Activated CD4-positive, alpha-beta T cell treated with anti-CD3 and anti-CD28 coated beads, Interleukin-2, amount 10 ng/mL, durations not matched to agents 24 days and 14 days (primary cell): ENCODE measurements at regions of chr21 and their contacts with region 1.

Region 1: DNA sequence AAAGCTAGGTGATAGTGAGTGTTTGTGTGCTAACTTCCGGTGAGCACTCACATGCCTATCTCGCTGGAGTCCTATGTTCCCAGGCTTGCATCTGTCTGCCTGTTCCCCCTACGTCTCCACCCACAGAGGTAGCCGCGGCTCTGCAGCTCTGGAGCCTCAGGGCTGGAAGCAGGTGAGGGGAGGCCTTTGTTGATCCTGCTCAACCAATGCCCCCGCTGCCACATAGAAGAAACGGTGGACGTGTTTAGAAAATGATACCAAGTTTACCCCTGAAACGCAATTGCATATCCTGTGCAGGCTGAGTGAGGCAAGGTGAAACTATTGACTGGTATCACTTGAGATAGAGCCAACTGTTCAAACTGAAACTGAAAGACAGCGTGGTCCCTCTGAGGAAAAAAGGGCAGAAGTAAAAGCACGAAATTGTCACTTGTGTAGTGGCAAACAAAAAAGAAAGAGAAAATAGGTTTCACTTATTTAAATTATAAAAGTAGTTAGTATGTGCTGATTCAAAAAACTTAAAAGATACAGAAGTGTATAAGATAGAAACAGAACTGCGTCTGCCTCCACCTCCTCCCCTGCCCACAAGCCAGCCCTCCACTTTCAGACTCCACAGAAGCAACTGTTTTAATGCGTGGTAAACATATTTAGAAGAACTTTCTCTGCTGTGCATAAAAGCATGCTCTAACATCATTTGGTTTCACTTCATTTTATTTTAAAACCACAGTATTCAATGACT is 38.6 kb upstream of the ETS2 start:
- DNase-seq: peak; percentile 93
- H3K4me3 Mint-ChIP-seq: peak overlapping the region; percentile 81
- H3K27ac Mint-ChIP-seq: peak overlapping the region; percentile 93
- H3K4me1 Mint-ChIP-seq: peaks cover 33% of the 10 kb centered on the region
- H3K27me3 Mint-ChIP-seq: no peaks in the 10 kb centered on the region

Region 2: GRCh38 chr21:38478782-38479181 is 288.4 kb before region 1 on chr21:
- intact Hi-C with region 1: loop called (anchors 1 kb)
- DNase-seq: peak; percentile 66
- H3K4me3 Mint-ChIP-seq: no peak overlapping the region
- H3K27ac Mint-ChIP-seq: no peak overlapping the region
- H3K4me1 Mint-ChIP-seq: peaks cover 9% of the 10 kb centered on the region
- H3K27me3 Mint-ChIP-seq: peaks cover 62% of the 10 kb centered on the region

Region 3: GRCh38 chr21:38780879-38781278 is 13.7 kb after region 1 on chr21:
- intact Hi-C with region 1: loop called (anchors 1 kb)
- DNase-seq: peak; percentile 79
- H3K4me3 Mint-ChIP-seq: peak overlapping the region; percentile 6
- H3K27ac Mint-ChIP-seq: peak overlapping the region; percentile 51
- H3K4me1 Mint-ChIP-seq: peaks cover 33% of the 10 kb centered on the region
- H3K27me3 Mint-ChIP-seq: no peaks in the 10 kb centered on the region

Region 4: DNA sequence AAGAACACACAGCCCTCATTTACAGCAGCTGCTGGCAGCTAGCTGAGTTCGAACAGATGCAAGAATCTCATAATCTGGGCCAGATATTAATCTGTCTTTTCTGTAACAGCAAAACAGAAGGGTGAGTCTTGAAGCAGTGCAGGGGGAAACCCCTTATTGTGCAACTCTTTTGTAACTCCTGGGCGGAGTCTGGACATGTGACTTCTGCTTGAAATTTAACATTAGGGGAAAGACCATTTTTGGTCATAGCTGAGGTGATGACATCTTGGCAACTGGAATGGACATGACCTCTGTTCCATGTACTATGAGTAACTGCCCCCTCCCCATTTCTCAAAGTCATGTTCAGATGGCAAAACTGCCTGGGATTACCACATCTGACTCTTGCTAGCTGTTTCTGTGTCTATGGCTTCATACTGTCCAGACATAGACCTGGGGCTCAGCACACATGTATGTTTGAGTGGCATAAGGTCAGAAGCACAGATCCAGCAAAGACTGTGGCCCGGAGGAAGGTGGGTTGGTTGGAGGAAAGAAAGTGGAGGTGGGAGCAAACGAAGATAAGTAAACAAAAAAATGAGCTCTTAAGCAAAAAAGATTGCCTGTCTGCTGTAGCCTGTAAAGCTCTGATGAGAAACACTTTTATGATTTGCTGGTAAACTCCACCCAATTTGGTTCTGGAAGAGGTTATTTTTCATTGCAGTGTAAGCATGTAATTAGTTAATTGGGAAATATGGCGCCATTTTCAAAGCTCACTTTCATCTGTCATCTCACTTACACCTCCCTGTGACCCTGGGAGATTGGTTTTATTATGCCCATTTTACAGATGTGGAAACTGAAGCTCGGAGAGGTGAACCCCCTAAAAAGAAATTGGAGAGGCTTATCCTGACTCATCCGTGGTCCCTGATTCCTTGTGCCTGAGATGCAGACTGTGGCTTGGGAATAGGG is 64.6 kb after region 1 on chr21:
- intact Hi-C with region 1: loop called (anchors 1 kb)
- DNase-seq: peak; percentile 85
- H3K4me3 Mint-ChIP-seq: no peak overlapping the region
- H3K27ac Mint-ChIP-seq: peak overlapping the region; percentile 35
- H3K4me1 Mint-ChIP-seq: peaks cover 15% of the 10 kb centered on the region
- H3K27me3 Mint-ChIP-seq: peaks cover 6% of the 10 kb centered on the region

Region 5: GRCh38 chr21:38985568-38986378 is 218.6 kb after region 1 on chr21:
- intact Hi-C with region 1: loop called (anchors 1 kb)
- DNase-seq: peak; percentile 88
- H3K4me3 Mint-ChIP-seq: peak overlapping the region; percentile 69
- H3K27ac Mint-ChIP-seq: peak overlapping the region; percentile 91
- H3K4me1 Mint-ChIP-seq: peaks cover 39% of the 10 kb centered on the region
- H3K27me3 Mint-ChIP-seq: peaks cover 4% of the 10 kb centered on the region

Region 6: GRCh38 chr21:39313571-39314142 is 546.5 kb after region 1 on chr21 and contains the start of gene BRWD1:
- intact Hi-C with region 1: loop called (anchors 5 kb)
- DNase-seq: peak; percentile 94
- H3K4me3 Mint-ChIP-seq: peak within 1 kb of the TSS; percentile 97
- H3K27ac Mint-ChIP-seq: peak within 1 kb of the TSS; percentile 98
- H3K4me1 Mint-ChIP-seq: peaks cover 32% of the 10 kb centered on the region
- H3K27me3 Mint-ChIP-seq: no peaks in the 10 kb centered on the region
- total RNA-seq, gene BRWD1: 29.7 and 31.9 TPM in 2 replicates